ENCODE measurements at regions of chr10 and their contacts with region 1.

Region 1: DNA sequence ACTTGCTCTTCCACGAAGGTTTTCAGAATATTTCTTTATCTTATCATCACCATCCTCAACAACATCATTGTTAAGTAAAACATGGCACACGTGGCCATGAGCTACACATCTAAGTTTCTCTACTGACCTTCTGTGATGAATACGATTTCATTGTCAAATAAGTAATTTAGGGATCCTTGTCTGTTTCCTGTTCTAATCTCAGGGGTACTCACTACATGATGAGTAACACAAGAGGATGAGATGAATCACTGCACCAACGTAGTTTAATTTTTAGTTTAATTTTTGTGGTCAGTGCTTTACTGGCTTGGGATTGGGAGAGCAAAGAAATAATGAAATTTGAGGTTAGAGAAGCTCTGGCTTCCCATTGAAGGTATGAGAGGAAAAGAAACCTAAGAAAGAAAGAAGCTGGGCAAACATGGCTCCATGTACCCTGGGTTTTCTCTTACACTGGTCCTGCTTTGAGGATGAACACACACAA is 461.9 kb upstream of the KLF6 start:
- DNase-seq: no peak
- ATAC-seq: peak; percentile 54
- H3K4me3 Mint-ChIP-seq: no peak overlapping the region
- H3K27ac Mint-ChIP-seq: peak overlapping the region; percentile 48
- H3K4me1 Mint-ChIP-seq: peaks cover 54% of the 10 kb centered on the region
- H3K27me3 Mint-ChIP-seq: peaks cover 5% of the 10 kb centered on the region

Region 2: DNA sequence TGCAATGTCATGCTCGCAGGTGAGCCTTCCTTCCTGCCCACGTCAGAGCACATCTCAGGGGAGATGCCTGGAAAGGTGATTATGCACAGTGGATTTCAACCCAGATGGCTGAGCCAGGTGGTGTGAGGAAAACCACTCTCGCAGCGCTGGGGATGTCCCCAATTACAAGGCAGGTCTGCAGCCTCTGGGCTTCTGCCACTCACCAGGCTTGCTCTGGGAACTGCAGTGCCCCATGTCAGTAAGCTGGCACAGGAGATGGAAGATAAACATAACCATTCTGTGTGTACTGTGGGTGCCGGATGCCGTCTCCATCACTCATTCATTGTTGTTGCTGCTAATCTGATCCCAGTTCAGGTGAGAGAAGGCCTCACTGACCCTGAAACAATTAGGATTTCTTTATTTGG is 851.5 kb before region 1 on chr10:
- CTCF ChIA-PET with region 1: no interaction called
- POLR2A ChIA-PET with region 1: interaction called, 10 read pairs
- intact Hi-C with region 1: no loop called
- DNase-seq: no peak
- ATAC-seq: no peak
- H3K4me3 Mint-ChIP-seq: no peak overlapping the region
- H3K27ac Mint-ChIP-seq: no peak overlapping the region
- H3K4me1 Mint-ChIP-seq: peaks cover 4% of the 10 kb centered on the region
- H3K27me3 Mint-ChIP-seq: peaks cover 7% of the 10 kb centered on the region